GM10248 (cell line): ENCODE measurements at regions of chr3 and their contacts with region 1.

Region 1: DNA sequence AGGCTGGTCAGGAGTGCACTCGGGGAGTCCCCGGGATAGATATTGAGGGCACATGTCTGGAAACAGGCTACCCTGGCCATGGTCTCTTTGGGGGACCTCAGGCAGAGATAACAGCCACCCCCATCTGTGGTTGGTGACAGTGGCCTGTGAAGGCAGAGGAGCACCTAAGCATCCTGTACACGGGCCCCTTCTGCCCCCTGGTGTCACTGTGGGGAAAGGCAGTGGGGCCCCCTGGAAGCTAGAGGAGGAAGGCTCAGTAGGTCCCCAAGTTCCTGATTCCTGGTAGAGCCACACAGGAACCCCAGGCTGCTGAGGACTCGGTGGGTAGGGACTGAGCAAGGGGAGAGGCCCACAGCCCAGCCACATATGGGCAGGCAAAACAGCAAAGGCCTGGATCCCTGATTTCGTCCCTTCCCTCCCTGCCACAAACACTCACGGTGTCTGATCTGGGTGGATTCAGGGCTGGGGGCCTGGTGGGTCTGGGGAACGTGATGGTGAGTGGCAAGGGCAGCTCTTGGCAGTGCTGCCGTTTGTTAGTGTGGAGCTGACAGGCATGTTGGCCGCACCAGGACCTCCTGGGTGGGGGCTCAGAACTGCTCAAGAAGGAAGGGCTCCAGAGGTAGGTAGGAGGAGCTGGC is 14.1 kb upstream of the CXCR6 start:
- DNase-seq: peak; percentile 88
- CTCF ChIP-seq: peak; percentile 97

Region 2: DNA sequence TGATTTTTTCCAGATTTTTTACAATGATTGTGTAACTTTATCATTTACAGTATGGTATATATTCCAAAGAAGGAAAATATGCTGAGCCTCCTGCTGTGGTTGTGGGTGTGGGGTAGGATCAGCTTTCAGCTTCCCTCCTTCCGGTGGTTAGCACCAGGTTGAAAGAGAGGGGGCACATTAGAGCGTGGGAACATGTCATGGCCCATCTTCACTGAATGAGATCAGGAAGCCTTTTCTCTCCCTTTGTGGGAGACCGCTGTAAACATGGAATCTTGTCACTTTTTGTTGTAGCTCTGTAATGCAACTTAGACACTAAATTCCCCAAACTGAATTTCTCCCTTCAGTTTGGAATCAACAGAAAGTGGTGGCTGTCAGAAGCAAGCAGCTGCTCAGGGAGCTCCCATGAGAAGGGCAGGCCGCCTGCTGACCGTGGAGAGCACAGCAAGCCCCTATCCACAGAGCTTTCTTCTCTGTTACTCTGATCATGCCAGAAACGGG is 421.3 kb before region 1 on chr3:
- CTCF ChIA-PET with region 1: interaction called, 15 read pairs
- POLR2A ChIA-PET with region 1: no interaction called
- DNase-seq: no peak
- CTCF ChIP-seq: no peak

Region 3: DNA sequence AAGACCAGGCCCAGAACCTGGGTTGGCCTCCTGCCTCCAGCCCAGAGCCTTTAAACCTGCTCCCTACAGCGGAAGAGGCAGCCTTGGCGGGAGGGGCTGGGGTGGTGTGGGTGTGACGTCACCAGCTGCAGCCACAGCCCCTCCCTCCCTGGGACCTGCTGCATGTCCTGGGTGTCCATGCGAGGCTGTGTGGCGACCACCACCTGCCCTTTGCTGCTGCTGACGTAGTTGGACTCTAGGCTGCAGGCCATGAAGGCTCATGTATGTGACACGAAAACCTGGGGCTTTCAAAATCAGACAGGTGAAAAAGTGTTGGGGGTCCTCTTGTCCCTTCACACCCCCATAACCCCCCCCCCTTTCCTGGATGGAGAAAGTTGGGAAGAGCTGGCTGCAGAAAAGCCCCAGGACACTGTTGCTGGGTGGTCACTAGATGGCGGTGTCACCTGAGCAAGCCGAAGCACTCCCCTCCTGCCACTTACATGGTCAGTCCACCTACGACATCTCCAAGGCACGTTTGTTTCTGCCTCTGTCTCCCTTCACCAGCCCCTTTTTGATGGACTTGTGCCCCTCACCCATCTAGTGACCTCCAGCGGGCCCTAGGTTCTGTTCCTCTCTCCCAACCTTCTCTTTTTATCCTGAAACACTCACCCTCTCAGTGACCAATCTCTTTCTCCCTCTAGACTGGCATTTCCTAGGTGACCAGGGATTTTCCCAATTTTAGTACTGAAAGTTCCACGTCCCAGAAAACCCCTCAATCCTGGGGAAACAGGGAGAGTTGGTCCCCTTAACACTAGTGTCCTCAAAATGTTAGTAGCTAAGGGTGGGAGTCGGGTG is 168.1 kb before region 1 on chr3:
- CTCF ChIA-PET with region 1: interaction called, 155 read pairs
- POLR2A ChIA-PET with region 1: no interaction called
- DNase-seq: peak; percentile 88
- CTCF ChIP-seq: peak; percentile 80

Region 4: GRCh38 chr3:45832691-45833090 is 96.5 kb before region 1 on chr3:
- CTCF ChIA-PET with region 1: interaction called, 28 read pairs
- POLR2A ChIA-PET with region 1: no interaction called
- DNase-seq: no peak
- CTCF ChIP-seq: no peak

Region 5: DNA sequence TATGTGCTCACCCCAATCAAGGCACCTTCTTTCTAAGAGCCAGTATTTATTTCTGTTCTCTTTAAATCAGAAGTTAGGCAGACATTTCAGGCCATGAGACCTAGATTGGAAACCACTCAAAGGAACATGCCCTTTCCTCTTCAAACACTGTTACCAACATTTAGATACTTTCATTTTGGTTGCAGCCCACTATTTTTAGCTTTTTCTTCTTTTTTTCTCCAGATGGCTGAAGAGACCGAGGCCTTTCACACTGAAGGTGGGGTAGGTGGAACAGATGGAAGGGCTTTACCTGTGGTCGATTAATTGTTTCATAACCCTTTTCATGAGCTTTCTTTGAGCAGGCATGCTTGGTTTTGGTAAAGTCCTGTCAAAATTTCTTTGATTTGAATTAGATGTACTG is 76.3 kb before region 1 on chr3:
- CTCF ChIA-PET with region 1: interaction called, 17 read pairs
- POLR2A ChIA-PET with region 1: no interaction called
- DNase-seq: peak; percentile 26
- CTCF ChIP-seq: no peak

Region 6: GRCh38 chr3:45881078-45882022 is 47.8 kb before region 1 on chr3:
- CTCF ChIA-PET with region 1: interaction called, 15 read pairs
- POLR2A ChIA-PET with region 1: no interaction called
- DNase-seq: peak; percentile 56
- CTCF ChIP-seq: no peak

Region 7: DNA sequence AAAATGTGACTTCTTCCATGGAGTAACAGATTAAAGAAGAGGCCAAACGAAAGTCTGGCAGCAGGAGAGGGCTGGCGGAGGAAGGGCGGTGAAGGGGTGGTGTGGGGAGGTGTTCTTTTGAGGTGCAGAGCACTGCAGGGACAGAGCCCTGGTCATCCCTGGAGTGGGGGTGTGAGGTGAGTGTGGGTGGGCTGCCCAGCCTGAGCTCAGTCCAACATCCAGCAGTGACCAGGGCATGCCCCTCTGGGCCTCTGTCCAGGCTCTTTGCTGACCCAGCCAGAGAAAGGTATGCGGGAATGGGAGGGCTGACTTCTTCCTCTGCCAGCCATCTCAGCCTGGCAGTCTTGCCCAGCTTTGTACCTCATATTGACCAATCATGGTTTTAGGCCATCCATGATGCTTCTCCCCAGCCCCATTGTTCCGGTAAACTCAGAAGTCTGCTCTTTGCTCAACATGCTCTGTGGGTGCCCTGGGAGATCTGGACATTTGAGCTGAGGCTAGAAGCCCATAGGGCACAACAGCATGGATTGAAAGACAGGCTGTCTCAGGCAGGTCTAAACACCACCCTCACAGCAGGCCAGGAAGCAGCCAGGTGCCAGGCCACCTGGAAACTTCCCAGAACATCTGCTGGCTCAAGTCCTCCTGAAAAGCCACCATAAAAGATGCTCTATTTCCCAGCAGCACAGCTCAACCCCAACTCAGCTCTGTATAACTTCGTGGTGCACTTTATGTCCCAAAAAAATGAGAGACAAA is 11.8 kb before region 1 on chr3:
- CTCF ChIA-PET with region 1: interaction called, 39 read pairs
- POLR2A ChIA-PET with region 1: no interaction called
- DNase-seq: no peak
- CTCF ChIP-seq: no peak